H1 (cell line): ENCODE measurements at regions of chr12 and their contacts with region 1.

Region 1: GRCh38 chr12:4037747-4038312 is 164.6 kb upstream of the PARP11 start:
- DNase-seq: no peak
- H3K4me3 ChIP-seq: no peak overlapping the region
- H3K27ac ChIP-seq: no peak overlapping the region
- H3K4me1 ChIP-seq: peaks cover 0 to 3% (median 0%) of the 10 kb centered on the region in 4 experiments; a peak in 2 of 7 replicates
- H3K27me3 ChIP-seq: no peaks in the 10 kb centered on the region
- CTCF ChIP-seq: peak in 2 of 3 experiments; percentile 67 to 73; a peak in 3 of 4 replicates
- EP300 ChIP-seq: no peak
- POLR2A ChIP-seq: no peak
- RAD21 ChIP-seq: peak; percentile 72 to 76

Region 2: GRCh38 chr12:3837049-3837448 is 200.8 kb before region 1 on chr12:
- CTCF ChIA-PET with region 1: no interaction called
- POLR2A ChIA-PET with region 1: no interaction called
- DNase-seq: no peak
- H3K4me3 ChIP-seq: no peak overlapping the region
- H3K27ac ChIP-seq: no peak overlapping the region
- H3K4me1 ChIP-seq: peaks cover 0 to 7% (median 2%) of the 10 kb centered on the region in 4 experiments; a peak in 5 of 7 replicates
- H3K27me3 ChIP-seq: no peaks in the 10 kb centered on the region
- CTCF ChIP-seq: peak in 2 of 3 experiments; percentile 25 to 33; a peak in 2 of 4 replicates
- EP300 ChIP-seq: no peak
- POLR2A ChIP-seq: no peak
- RAD21 ChIP-seq: peak; percentile 44 to 61; a peak in 3 of 4 replicates

Region 3: DNA sequence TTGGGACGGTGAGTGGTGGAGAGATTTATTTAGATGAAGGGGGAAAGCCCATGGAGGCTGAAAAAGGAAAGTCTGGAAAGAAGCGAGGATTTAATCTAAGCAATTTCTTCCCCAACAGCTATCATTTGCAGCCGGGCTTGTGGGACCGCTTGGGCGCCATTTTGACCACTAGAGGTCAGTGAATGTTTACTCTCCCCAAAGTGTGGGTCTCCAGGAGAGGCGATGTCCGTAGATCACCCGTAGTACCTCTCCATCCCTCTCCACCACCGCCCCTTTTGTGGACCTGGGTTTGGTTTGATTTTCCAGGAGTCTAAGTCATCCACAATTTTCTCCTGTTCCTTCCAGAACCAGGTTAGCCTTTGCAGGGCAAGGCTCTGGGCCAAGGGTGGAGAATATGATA is 73.4 kb before region 1 on chr12:
- CTCF ChIA-PET with region 1: interaction called, 54 read pairs
- POLR2A ChIA-PET with region 1: no interaction called
- DNase-seq: peak; percentile 17 to 70
- H3K4me3 ChIP-seq: no peak overlapping the region
- H3K27ac ChIP-seq: no peak overlapping the region
- H3K4me1 ChIP-seq: peaks cover 0 to 2% (median 0%) of the 10 kb centered on the region in 4 experiments; a peak in 2 of 7 replicates
- H3K27me3 ChIP-seq: no peaks in the 10 kb centered on the region
- CTCF ChIP-seq: peak; percentile 68 to 72 (median 69)
- EP300 ChIP-seq: no peak
- POLR2A ChIP-seq: no peak
- RAD21 ChIP-seq: peak; percentile 79 to 87

Region 4: DNA sequence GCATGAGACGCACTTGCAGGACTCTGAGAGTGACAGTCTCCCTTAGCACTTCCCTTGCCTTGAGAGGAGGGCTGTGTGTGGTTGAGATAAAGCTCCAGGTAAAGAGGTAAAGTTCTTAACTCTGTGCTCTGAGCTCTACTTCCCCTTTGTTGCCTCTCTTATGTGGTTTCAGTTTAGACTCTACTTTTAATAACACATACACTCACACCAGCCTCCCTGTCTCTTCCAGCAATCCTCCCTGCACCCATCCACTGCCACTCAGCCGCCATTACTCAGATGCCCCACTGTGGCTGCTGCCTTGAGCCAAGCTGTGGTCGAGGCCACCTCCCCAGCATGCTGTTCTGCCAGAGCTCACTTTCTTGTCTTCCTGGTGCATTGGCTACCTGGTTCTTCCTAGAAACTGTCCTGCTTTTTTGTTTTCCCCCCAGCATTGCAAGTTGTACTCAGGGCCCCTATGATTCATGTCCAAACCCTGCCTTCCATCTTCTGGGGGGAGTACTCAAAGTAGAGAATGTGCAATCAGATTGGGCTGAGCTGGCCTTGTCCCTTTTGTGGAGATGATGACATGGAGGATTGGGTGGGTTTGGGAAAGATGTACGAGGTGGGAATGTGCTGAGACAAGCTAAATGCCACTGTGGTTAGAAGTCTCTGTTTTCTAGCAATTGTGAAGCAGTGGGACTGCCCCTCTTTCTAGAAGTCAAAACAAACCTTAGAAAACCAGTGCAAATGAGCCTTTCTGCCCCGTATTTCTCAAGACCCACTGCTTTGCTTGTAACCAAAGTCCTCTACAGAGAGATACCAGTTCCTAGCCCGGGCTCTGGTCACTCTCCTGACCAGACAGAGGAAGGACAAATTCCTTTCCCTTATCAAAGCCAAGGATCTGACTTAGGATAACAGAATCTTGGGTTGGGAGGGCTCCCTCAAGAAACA is 49.0 kb before region 1 on chr12:
- CTCF ChIA-PET with region 1: interaction called, 273 read pairs
- POLR2A ChIA-PET with region 1: no interaction called
- DNase-seq: no peak
- H3K4me3 ChIP-seq: no peak overlapping the region
- H3K27ac ChIP-seq: no peak overlapping the region
- H3K4me1 ChIP-seq: no peaks in the 10 kb centered on the region; a peak in 1 of 7 replicates
- H3K27me3 ChIP-seq: no peaks in the 10 kb centered on the region
- CTCF ChIP-seq: no peak
- EP300 ChIP-seq: no peak
- POLR2A ChIP-seq: no peak
- RAD21 ChIP-seq: no peak

Region 5: GRCh38 chr12:4011597-4011996 is 26.2 kb before region 1 on chr12:
- CTCF ChIA-PET with region 1: interaction called, 59 read pairs
- POLR2A ChIA-PET with region 1: interaction called, 5 read pairs
- DNase-seq: no peak
- H3K4me3 ChIP-seq: no peak overlapping the region
- H3K27ac ChIP-seq: no peak overlapping the region
- H3K4me1 ChIP-seq: no peaks in the 10 kb centered on the region
- H3K27me3 ChIP-seq: no peaks in the 10 kb centered on the region
- CTCF ChIP-seq: no peak
- EP300 ChIP-seq: no peak
- POLR2A ChIP-seq: no peak
- RAD21 ChIP-seq: no peak

Region 6: DNA sequence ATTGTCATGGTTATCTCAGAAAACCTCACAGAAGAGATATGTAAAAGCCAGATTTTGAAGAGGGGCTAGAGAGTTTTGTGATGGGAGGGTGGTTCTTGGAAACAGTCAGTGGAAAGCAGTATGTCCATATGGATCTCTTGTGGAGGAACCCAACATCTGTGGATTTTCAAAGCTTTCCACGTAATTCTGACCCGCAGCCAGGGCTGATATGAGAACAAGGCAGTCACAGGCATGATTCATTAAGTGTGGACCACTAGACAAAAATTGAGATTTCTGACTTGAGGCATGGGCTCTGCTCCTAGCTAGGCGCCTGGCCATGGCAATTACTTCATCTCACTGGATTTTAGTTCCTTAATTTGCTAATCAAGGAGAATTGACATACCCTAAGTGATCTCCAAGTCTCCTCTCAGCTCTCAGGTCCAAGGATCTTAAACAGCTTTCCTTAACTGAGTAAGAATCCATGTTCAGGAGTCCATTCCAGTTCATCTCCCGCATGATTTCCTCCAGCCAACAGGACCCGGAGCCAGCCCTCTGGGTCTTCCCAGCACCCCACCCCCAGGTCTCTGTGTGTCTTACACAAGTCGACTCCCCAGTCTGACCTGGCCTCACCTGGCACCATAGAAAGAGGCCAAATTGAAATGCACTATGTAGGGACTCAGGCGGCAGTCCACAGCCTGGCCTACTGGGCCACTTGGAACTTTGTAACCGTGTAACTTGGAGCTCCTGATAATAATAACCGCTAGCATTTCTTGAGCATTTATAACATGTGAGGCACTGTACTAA is 11.7 kb after region 1 on chr12:
- CTCF ChIA-PET with region 1: interaction called, 54 read pairs
- POLR2A ChIA-PET with region 1: interaction called, 3 read pairs
- DNase-seq: peak in 1 of 2 experiments; percentile 33
- H3K4me3 ChIP-seq: no peak overlapping the region
- H3K27ac ChIP-seq: no peak overlapping the region
- H3K4me1 ChIP-seq: peaks cover 0 to 8% (median under 1%) of the 10 kb centered on the region in 4 experiments; a peak in 2 of 7 replicates
- H3K27me3 ChIP-seq: no peaks in the 10 kb centered on the region; a peak in 1 of 7 replicates
- CTCF ChIP-seq: no peak
- EP300 ChIP-seq: no peak
- POLR2A ChIP-seq: no peak
- RAD21 ChIP-seq: no peak

Region 7: GRCh38 chr12:4118017-4118510 is 80.2 kb after region 1 on chr12:
- CTCF ChIA-PET with region 1: interaction called, 11 read pairs
- POLR2A ChIA-PET with region 1: no interaction called
- DNase-seq: peak in 1 of 2 experiments; percentile 32
- H3K4me3 ChIP-seq: no peak overlapping the region
- H3K27ac ChIP-seq: no peak overlapping the region
- H3K4me1 ChIP-seq: peaks cover 3 to 10% (median 6%) of the 10 kb centered on the region in 4 experiments; a peak in 6 of 7 replicates
- H3K27me3 ChIP-seq: no peaks in the 10 kb centered on the region
- CTCF ChIP-seq: no peak
- EP300 ChIP-seq: no peak
- POLR2A ChIP-seq: no peak
- RAD21 ChIP-seq: no peak

Region 8: GRCh38 chr12:4282892-4283511 is 245.2 kb after region 1 on chr12:
- CTCF ChIA-PET with region 1: interaction called, 52 read pairs
- POLR2A ChIA-PET with region 1: no interaction called
- DNase-seq: peak in 1 of 2 experiments; percentile 56
- H3K4me3 ChIP-seq: no peak overlapping the region
- H3K27ac ChIP-seq: no peak overlapping the region
- H3K4me1 ChIP-seq: peaks cover 0 to 3% (median 0%) of the 10 kb centered on the region in 4 experiments; a peak in 6 of 7 replicates
- H3K27me3 ChIP-seq: no peaks in the 10 kb centered on the region
- CTCF ChIP-seq: peak; percentile 29 to 37 (median 32); a peak in 3 of 4 replicates
- EP300 ChIP-seq: no peak
- POLR2A ChIP-seq: no peak; a peak in 1 of 3 replicates
- RAD21 ChIP-seq: peak; percentile 35 to 41; a peak in 3 of 4 replicates